ENCODE measurements at regions of chr9 and their contacts with region 1.

Region 1: GRCh38 chr9:112379177-112380101 is 469 bp upstream of the HSDL2 start:
- DNase-seq: peak; percentile 99
- H3K4me3 Mint-ChIP-seq: peak overlapping the region; percentile 100
- H3K27ac Mint-ChIP-seq: peak overlapping the region; percentile 99
- H3K4me1 Mint-ChIP-seq: peaks cover 39% of the 10 kb centered on the region
- H3K27me3 Mint-ChIP-seq: no peaks in the 10 kb centered on the region

Region 2: DNA sequence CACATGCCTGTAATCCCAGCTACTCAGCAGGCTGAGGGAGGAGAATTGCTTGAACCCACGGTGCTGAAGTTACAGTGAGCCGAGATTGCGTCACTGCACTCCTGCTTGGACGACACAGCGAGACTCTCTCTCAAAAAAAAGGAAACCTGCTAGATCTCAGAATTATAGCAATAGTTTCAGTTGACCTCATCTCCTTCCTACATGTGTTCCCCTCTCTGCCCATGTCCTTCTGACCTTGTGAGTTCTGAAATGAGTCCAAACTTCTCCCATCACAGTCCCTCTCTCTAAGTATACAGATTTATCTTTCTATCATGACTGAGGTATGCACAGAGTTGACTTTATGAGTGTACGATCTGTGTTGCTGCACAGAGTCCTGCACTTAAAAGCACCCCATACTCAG is 540.1 kb before region 1 on chr9:
- CTCF ChIA-PET with region 1: no interaction called
- intact Hi-C with region 1: no loop called
- DNase-seq: no peak
- H3K4me3 Mint-ChIP-seq: no peak overlapping the region
- H3K27ac Mint-ChIP-seq: no peak overlapping the region
- H3K4me1 Mint-ChIP-seq: peaks cover 2% of the 10 kb centered on the region
- H3K27me3 Mint-ChIP-seq: peaks cover 3% of the 10 kb centered on the region

Region 3: GRCh38 chr9:111896353-111896958 is 483.0 kb before region 1 on chr9 and contains the start of gene UGCG:
- CTCF ChIA-PET with region 1: no interaction called
- intact Hi-C with region 1: loop called (anchors 1 kb)
- DNase-seq: peak; percentile 86
- H3K4me3 Mint-ChIP-seq: peak within 1 kb of the TSS; percentile 81
- H3K27ac Mint-ChIP-seq: peak within 1 kb of the TSS; percentile 87
- H3K4me1 Mint-ChIP-seq: peaks cover 17% of the 10 kb centered on the region
- H3K27me3 Mint-ChIP-seq: no peaks in the 10 kb centered on the region
- total RNA-seq, gene UGCG: 8.8 to 10.5 TPM

Region 4: GRCh38 chr9:112097712-112098688 is 281.4 kb before region 1 on chr9:
- CTCF ChIA-PET with region 1: interaction called, 20 read pairs
- intact Hi-C with region 1: no loop called
- DNase-seq: peak; percentile 83
- H3K4me3 Mint-ChIP-seq: no peak overlapping the region
- H3K27ac Mint-ChIP-seq: no peak overlapping the region
- H3K4me1 Mint-ChIP-seq: peaks cover 16% of the 10 kb centered on the region
- H3K27me3 Mint-ChIP-seq: no peaks in the 10 kb centered on the region

Region 5: DNA sequence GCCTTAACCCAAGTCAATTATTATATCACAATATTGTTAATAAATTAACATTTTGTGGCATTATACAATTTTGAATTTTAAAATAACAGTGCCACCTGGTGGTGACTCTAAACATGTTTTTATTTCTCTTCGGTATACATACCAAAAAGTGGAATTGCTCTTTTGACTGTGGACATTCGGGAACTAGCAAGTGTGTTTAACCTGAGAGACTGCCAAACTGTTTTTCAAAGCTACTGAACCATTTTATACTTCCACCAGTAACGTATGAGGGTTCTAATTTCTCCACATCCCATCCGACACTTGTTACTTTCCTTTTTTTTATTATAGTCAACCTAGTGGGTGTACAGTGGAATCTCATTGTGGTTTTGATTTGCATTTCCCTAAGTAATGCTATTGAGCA is 17.8 kb before region 1 on chr9:
- CTCF ChIA-PET with region 1: interaction called, 24 read pairs
- intact Hi-C with region 1: loop called (anchors 1 kb)
- DNase-seq: no peak
- H3K4me3 Mint-ChIP-seq: no peak overlapping the region
- H3K27ac Mint-ChIP-seq: no peak overlapping the region
- H3K4me1 Mint-ChIP-seq: peaks cover 12% of the 10 kb centered on the region
- H3K27me3 Mint-ChIP-seq: no peaks in the 10 kb centered on the region

Region 6: DNA sequence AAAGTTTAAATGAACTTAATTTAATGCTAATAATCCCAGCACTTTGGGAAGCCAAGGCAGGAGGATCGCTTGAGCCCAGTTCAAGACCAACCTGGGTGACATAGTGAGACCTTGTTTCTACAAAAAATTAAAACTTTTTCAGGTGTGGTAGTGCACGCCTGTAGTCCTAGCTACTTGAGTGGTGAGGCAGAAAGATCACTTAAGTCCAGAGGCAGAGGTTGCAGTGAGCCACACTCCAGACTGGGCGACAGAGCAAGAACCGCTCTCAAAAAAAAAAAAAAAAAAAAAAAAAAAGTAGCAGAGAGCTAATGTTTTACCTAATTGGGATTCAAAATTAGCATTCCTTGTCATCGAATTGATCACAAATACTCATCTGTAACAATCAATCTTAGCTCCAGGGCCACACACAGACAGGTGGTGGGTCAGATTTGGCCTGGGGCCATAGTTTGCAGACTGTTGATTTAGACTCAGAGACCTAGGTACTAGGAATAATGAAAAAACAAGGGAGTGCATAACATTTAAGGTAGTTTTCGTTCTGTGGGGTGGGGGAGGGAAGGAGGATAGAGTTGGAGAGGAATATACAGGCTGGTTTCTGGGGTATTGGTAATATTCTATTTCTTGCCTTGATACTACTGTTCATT is 21.9 kb after region 1 on chr9:
- CTCF ChIA-PET with region 1: no interaction called
- intact Hi-C with region 1: no loop called
- DNase-seq: no peak
- H3K4me3 Mint-ChIP-seq: no peak overlapping the region
- H3K27ac Mint-ChIP-seq: no peak overlapping the region
- H3K4me1 Mint-ChIP-seq: no peaks in the 10 kb centered on the region
- H3K27me3 Mint-ChIP-seq: no peaks in the 10 kb centered on the region

Region 7: DNA sequence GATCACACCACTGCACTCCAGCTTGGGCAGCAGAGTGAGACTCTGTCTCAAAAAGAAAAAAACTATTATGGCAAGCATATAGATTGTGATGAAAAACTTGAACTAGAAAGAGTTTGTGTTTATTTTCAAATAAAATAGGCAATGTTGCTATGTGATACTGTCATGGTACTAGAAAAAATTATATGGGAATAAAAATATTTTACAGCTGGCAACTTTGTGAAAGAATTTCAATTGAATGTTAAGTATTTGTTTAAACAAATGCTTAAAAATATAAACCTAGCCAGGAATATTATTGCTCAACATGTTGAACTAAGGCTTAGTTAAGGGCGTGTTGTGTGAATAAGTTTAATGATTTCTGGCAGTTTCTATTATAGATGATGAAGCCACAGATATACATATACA is 32.2 kb after region 1 on chr9:
- CTCF ChIA-PET with region 1: no interaction called
- intact Hi-C with region 1: no loop called
- DNase-seq: no peak
- H3K4me3 Mint-ChIP-seq: no peak overlapping the region
- H3K27ac Mint-ChIP-seq: no peak overlapping the region
- H3K4me1 Mint-ChIP-seq: no peaks in the 10 kb centered on the region
- H3K27me3 Mint-ChIP-seq: no peaks in the 10 kb centered on the region

Region 8: GRCh38 chr9:112479221-112479620 is 99.8 kb after region 1 on chr9:
- CTCF ChIA-PET with region 1: no interaction called
- intact Hi-C with region 1: no loop called
- DNase-seq: no peak
- H3K4me3 Mint-ChIP-seq: no peak overlapping the region
- H3K27ac Mint-ChIP-seq: no peak overlapping the region
- H3K4me1 Mint-ChIP-seq: no peaks in the 10 kb centered on the region
- H3K27me3 Mint-ChIP-seq: no peaks in the 10 kb centered on the region

Region 9: DNA sequence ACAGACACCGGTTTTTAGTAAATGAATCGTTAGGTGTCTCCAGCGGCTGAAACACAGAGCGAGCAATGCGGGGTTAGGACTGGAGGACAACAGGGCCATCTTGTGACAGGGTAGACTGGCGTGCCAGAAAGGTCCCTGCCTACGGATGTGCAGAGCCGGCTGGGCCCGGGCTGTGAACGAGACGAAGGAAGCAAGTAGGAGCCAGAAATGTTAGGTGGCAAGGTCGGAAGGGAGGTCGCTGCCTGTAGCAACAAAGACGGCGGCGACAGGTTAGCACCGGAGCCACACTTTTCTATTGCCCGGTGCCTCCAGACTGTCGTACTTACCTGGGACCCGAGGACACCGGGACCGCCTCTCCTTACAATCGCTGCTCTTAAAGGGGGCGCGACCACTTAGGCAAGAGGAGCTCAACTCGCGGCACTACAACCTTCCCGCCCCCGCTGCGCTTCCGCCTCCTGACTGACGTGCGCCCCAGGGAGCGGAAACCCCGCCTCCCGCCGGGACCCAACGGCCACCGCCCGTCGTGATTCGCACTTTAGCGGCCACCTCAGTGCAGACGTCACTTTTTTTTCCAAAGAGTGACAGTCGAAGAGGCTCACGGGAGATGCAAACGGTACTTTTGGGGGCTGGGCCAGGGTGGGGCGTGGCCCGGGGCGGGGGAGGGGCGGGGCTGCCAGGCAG is 338.4 kb after region 1 on chr9 and contains the start of gene INIP:
- CTCF ChIA-PET with region 1: interaction called, 3 read pairs
- intact Hi-C with region 1: loop called (anchors 1 kb)
- DNase-seq: peak; percentile 97
- H3K4me3 Mint-ChIP-seq: peak within 1 kb of the TSS; percentile 97
- H3K27ac Mint-ChIP-seq: peak within 1 kb of the TSS; percentile 94
- H3K4me1 Mint-ChIP-seq: peaks cover 23% of the 10 kb centered on the region
- H3K27me3 Mint-ChIP-seq: no peaks in the 10 kb centered on the region
- total RNA-seq, gene INIP: 31.1 to 33.4 TPM

Region 10: GRCh38 chr9:113150670-113151611 is 771.5 kb after region 1 on chr9 and contains the start of gene SLC31A2:
- CTCF ChIA-PET with region 1: no interaction called
- intact Hi-C with region 1: loop called (anchors 5 kb)
- DNase-seq: peak; percentile 87
- H3K4me3 Mint-ChIP-seq: peak within 1 kb of the TSS; percentile 71
- H3K27ac Mint-ChIP-seq: no peak within 1 kb of the TSS
- H3K4me1 Mint-ChIP-seq: peaks cover 23% of the 10 kb centered on the region
- H3K27me3 Mint-ChIP-seq: no peaks in the 10 kb centered on the region
- total RNA-seq, gene SLC31A2: 1.2 to 1.7 TPM

Measured in activated naive CD4-positive, alpha-beta T cell treated with anti-CD3 and anti-CD28 coated beads for 36 hours (primary cell).